PC-9 (cell line): ENCODE measurements at regions of chr5 and their contacts with region 1.

Region 1: GRCh38 chr5:172733131-172733973 is 37.6 kb downstream of the DUSP1 start:
- DNase-seq: peak; percentile 89
- H3K4me3 ChIP-seq: peak overlapping the region; percentile 5; the same call in 1 of the 2 replicates
- H3K27ac ChIP-seq: peak overlapping the region; percentile 96
- H3K4me1 ChIP-seq: peaks cover 44% of the 10 kb centered on the region
- H3K27me3 ChIP-seq: no peaks in the 10 kb centered on the region
- CTCF ChIP-seq: no peak

Region 2: GRCh38 chr5:172697123-172698121 is 35.9 kb before region 1 on chr5:
- CTCF ChIA-PET with region 1: no interaction called
- POLR2A ChIA-PET with region 1: no interaction called
- intact Hi-C with region 1: no loop called
- DNase-seq: peak; percentile 70 to 89
- H3K4me3 ChIP-seq: peak overlapping the region; percentile 64
- H3K27ac ChIP-seq: no peak overlapping the region
- H3K4me1 ChIP-seq: no peaks in the 10 kb centered on the region
- H3K27me3 ChIP-seq: peaks cover 15% of the 10 kb centered on the region
- CTCF ChIP-seq: peak; percentile 93

Region 3: GRCh38 chr5:172764849-172765765 is 31.8 kb after region 1 on chr5:
- CTCF ChIA-PET with region 1: interaction called, 3 read pairs
- POLR2A ChIA-PET with region 1: interaction called, 20 read pairs
- intact Hi-C with region 1: loop called (anchors 1 kb)
- DNase-seq: peak; percentile 97 to 99
- H3K4me3 ChIP-seq: peak overlapping the region; percentile 52; the same call in 1 of the 2 replicates
- H3K27ac ChIP-seq: peak overlapping the region; percentile 59
- H3K4me1 ChIP-seq: peaks cover 31% of the 10 kb centered on the region
- H3K27me3 ChIP-seq: no peaks in the 10 kb centered on the region
- CTCF ChIP-seq: no peak

Region 4: DNA sequence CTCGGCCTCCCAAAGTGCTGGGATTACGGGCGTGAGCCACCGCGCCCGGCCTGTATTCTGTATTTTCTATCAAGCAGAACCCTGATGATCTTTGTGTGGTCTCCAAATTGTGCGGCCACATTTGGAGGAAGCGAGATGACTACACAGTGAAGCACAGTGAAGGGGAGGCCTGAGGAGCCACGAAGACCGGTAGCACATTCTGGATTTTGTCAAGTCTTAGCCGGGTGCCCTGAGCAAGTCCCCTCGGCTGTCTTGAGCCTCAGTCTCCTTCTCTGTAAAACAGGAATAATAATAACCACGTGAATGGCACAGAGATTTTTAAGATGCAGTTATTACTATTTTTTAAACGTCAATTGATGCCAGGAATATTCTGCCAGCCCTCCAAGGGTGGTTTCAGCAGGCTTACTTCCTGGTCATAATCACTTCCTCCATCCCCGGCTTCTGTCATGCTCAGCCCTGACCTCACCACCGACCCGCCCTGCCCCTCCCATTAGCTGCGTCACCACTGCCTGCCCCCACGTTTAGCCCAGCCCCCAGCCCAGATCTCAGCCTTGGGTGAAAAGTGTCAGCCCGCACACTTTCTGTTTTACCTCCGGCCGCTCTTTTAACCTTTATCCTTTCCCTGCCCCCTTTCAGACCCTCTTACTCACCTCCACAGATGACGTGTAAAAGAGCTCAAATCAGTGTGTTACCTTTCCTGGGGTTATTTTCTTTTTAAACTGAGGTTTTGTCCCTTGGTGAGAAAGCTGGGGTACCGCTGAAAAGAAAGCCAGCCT is 73.7 kb after region 1 on chr5:
- CTCF ChIA-PET with region 1: no interaction called
- POLR2A ChIA-PET with region 1: interaction called, 11 read pairs
- intact Hi-C with region 1: loop called (anchors 1 kb)
- DNase-seq: peak; percentile 86 to 89
- H3K4me3 ChIP-seq: peak overlapping the region; percentile 44; the same call in 1 of the 2 replicates
- H3K27ac ChIP-seq: peak overlapping the region; percentile 83
- H3K4me1 ChIP-seq: peaks cover 23% of the 10 kb centered on the region
- H3K27me3 ChIP-seq: no peaks in the 10 kb centered on the region
- CTCF ChIP-seq: no peak

Region 5: DNA sequence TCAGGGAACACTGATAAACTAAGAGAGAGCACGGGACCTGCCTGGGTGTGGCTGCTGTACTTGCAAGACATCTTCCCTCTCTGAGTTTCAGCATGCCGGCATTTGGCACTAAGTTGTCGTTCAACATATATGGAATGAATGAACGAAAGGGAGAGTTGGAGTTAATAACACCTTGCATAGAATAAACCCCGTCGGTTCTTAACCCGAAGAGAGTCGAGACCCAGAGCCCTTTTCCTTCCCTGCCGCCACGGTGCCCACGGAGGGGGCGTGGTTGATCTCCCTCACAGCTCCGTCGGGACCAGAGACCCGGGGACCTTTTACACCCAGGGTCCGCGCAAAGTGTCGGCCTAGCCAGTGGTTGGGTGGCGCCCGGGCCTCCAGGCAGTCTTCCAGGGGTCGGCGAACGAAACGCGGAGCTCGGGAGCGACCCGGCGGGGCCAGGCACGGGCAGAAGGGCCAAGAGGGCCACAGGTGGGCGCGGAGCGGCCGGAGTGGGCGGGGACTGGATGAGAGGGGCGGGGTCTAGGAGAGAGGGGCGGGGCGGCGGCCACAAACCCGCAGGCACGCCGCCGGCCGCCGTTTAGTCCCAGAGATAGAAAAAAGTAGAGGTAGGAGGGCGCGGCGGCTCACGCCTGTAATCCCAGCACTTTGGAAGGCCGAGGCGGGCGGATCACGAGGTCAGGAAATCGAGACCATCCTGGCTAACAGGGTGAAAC is 225.1 kb after region 1 on chr5:
- CTCF ChIA-PET with region 1: interaction called, 4 read pairs
- POLR2A ChIA-PET with region 1: interaction called, 10 read pairs
- intact Hi-C with region 1: no loop called
- DNase-seq: peak; percentile 55 to 74
- H3K4me3 ChIP-seq: peak overlapping the region; percentile 99
- H3K27ac ChIP-seq: peak overlapping the region; percentile 72
- H3K4me1 ChIP-seq: peaks cover 14% of the 10 kb centered on the region
- H3K27me3 ChIP-seq: no peaks in the 10 kb centered on the region
- CTCF ChIP-seq: no peak